Heart right ventricle (tissue), 16 donors: ENCODE measurements at regions of chr9 and their contacts with region 1.

Region 1: GRCh38 chr9:37650873-37651768 is at the start of gene FRMPD1:
- DNase-seq: peak; percentile 14 to 66
- ATAC-seq: peak; percentile 73 to 94 (median 88)
- H3K4me3 ChIP-seq: peak within 1 kb of the TSS; percentile 45 to 68 (median 64)
- H3K27ac ChIP-seq: no peak within 1 kb of the TSS
- H3K4me1 ChIP-seq: peaks cover 0 to 15% (median 7%) of the 10 kb centered on the region in 9 donors
- H3K27me3 ChIP-seq: peaks cover 5 to 77% (median 35%) of the 10 kb centered on the region in 7 donors
- CTCF ChIP-seq: peak in 1 of 9 donors; percentile 8
- total RNA-seq, gene FRMPD1: 0.38 to 1.7 (median 0.67) TPM

Region 2: GRCh38 chr9:37602817-37603216 is 48.3 kb before region 1 on chr9:
- intact Hi-C with region 1: loop called in 3 of 10 experiments (anchors 10 kb)
- DNase-seq: peak in 1 of 2 donors; percentile 18
- ATAC-seq: peak in 7 of 8 donors; percentile 24 to 92 (median 53)
- H3K4me3 ChIP-seq: no peak overlapping the region
- H3K27ac ChIP-seq: no peak overlapping the region
- H3K4me1 ChIP-seq: peaks cover 0 to 10% (median 5%) of the 10 kb centered on the region in 9 donors
- H3K27me3 ChIP-seq: peaks cover 0 to 4% (median 0%) of the 10 kb centered on the region in 7 donors
- CTCF ChIP-seq: no peak